ENCODE measurements at regions of chr2 and their contacts with region 1.

Region 1: DNA sequence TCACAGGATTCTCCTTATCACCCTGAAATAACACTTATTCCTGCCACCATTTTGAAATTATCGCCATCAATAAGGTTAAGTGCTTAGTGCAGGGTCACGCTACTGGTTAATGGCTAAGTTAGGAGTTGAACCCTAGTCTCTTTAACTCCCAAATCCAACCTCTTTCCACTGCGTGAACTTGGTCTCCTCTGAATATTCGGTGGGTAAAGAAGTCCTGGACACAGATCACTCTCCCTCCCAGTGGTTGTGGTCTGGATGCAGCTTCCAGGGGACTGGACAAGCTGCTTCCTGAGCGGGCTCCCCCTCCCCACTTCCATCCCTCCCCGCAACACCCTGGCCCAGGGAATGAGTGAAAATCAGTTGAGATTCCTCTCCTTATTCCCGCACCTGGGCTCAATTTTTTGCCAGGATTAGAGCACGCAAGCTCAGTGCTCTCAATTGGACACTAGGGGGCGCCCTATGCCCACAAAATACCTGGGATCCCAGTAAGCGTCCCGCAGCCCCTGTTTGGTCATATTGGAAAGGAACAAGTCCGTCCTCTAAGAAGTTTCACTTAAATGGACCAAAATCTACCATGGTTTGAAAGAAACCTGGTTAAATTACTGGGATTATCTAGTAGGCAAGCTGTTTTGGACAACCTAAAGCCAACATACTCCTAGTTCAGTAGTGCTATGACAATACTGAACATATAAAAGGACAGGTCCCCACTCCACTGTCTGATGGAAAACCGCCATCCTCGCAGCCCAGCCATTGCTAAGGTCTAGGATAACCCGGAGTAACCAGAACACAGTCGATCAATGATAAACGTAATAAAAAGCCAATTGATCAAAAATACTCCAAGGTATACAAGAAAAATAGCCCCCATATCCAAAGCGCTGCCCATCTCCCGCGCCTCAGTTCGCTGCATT is 40.4 kb downstream of the DHRS9 start:
- DNase-seq: peak; percentile 90 to 92 (median 92)
- ATAC-seq: peak; percentile 96
- H3K4me3 ChIP-seq: no peak overlapping the region
- H3K27ac ChIP-seq: no peak overlapping the region
- H3K4me1 ChIP-seq: peaks cover 0 to 17% of the 10 kb centered on the region in 2 experiments; a peak in 4 of 5 replicates
- H3K27me3 ChIP-seq: no peaks in the 10 kb centered on the region
- CTCF ChIP-seq: peak; percentile 90 to 95 (median 95)
- EP300 ChIP-seq: no peak
- POLR2A ChIP-seq: no peak
- RAD21 ChIP-seq: peak; percentile 98

Region 2: DNA sequence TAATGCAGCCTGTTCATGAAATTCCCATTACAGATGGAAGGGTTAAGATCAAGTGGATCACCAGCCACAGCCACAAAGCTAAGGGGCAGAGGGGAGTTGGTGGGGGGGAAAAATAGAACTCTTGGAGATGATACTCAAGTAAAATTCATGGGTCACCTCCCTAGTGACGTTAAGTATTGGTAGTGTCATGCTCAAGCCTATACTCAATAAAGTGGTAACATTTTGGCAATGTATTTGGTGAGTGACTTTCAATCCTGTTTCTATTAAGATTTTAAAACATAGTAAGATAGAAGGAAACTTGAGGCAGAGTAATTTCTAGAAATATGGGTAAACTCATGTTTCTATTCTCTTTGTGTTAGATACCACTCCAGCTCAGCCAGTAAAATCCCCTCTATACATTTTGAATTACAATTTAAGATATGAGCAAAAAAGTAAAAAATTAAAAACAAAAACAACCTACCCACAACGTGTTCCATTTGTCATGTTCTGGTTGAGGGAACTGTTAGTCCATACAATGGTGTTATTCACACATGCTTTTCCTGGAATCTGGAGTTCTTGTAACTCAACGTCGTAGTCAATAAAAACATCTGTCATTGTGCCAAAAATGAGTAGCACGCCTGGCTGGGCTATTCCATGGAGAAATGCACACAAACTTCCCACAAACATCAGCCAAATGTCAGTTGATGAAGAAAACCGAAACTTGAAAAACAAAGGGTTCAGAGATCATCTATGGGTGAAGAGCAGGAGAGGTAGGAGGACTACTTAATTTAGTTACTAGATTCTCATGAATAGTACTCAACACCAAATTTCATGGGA is 96.7 kb before region 1 on chr2:
- CTCF ChIA-PET with region 1: no interaction called
- POLR2A ChIA-PET with region 1: no interaction called
- in situ Hi-C with region 1: no loop called
- intact Hi-C with region 1: no loop called
- DNase-seq: no peak
- ATAC-seq: no peak
- H3K4me3 ChIP-seq: no peak overlapping the region
- H3K27ac ChIP-seq: no peak overlapping the region
- H3K4me1 ChIP-seq: peaks cover 12 to 48% of the 10 kb centered on the region in 2 experiments; a peak in 4 of 5 replicates
- H3K27me3 ChIP-seq: no peaks in the 10 kb centered on the region
- CTCF ChIP-seq: no peak
- EP300 ChIP-seq: no peak
- POLR2A ChIP-seq: no peak
- RAD21 ChIP-seq: no peak

Region 3: GRCh38 chr2:169034256-169034655 is 75.5 kb before region 1 on chr2:
- CTCF ChIA-PET with region 1: no interaction called
- POLR2A ChIA-PET with region 1: no interaction called
- in situ Hi-C with region 1: no loop called
- intact Hi-C with region 1: loop called (anchors 5 kb)
- DNase-seq: peak in 2 of 4 experiments; percentile 67 to 78
- ATAC-seq: peak; percentile 89
- H3K4me3 ChIP-seq: no peak overlapping the region
- H3K27ac ChIP-seq: peak overlapping the region; percentile 36; the same call in 1 of the 3 replicates
- H3K4me1 ChIP-seq: peaks cover 0 to 29% of the 10 kb centered on the region in 2 experiments; a peak in 4 of 5 replicates
- H3K27me3 ChIP-seq: no peaks in the 10 kb centered on the region
- CTCF ChIP-seq: peak in 2 of 3 experiments; percentile 23 to 37; a peak in 2 of 6 replicates
- EP300 ChIP-seq: peak; percentile 62; the same call in 1 of the 2 replicates
- POLR2A ChIP-seq: no peak
- RAD21 ChIP-seq: peak; percentile 28 to 61; a peak in 2 of 4 replicates

Region 4: GRCh38 chr2:169221745-169222369 is 112.1 kb after region 1 on chr2:
- CTCF ChIA-PET with region 1: interaction called, 19 read pairs
- POLR2A ChIA-PET with region 1: interaction called, 3 read pairs
- in situ Hi-C with region 1: loop called (anchors 5 kb)
- intact Hi-C with region 1: loop called (anchors 1 kb)
- DNase-seq: peak; percentile 24 to 71 (median 42)
- ATAC-seq: peak; percentile 87
- H3K4me3 ChIP-seq: no peak overlapping the region
- H3K27ac ChIP-seq: no peak overlapping the region
- H3K4me1 ChIP-seq: peaks cover 0 to 2% of the 10 kb centered on the region in 2 experiments; a peak in 1 of 5 replicates
- H3K27me3 ChIP-seq: no peaks in the 10 kb centered on the region
- CTCF ChIP-seq: peak; percentile 57 to 84 (median 63); a peak in 5 of 6 replicates
- EP300 ChIP-seq: no peak
- POLR2A ChIP-seq: no peak
- RAD21 ChIP-seq: peak; percentile 93 to 95

Region 5: GRCh38 chr2:169397697-169398096 is 287.9 kb after region 1 on chr2:
- CTCF ChIA-PET with region 1: no interaction called
- POLR2A ChIA-PET with region 1: no interaction called
- in situ Hi-C with region 1: no loop called
- intact Hi-C with region 1: loop called (anchors 1 kb)
- DNase-seq: peak in 3 of 4 experiments; percentile 16 to 34 (median 32)
- ATAC-seq: peak; percentile 57; the same call in 1 of the 3 replicates
- H3K4me3 ChIP-seq: no peak overlapping the region
- H3K27ac ChIP-seq: no peak overlapping the region
- H3K4me1 ChIP-seq: peaks cover 0 to 6% of the 10 kb centered on the region in 2 experiments; a peak in 2 of 5 replicates
- H3K27me3 ChIP-seq: peaks cover 4 to 19% of the 10 kb centered on the region in 2 experiments
- CTCF ChIP-seq: peak in 2 of 3 experiments; percentile 30 to 57; a peak in 2 of 6 replicates
- EP300 ChIP-seq: no peak
- POLR2A ChIP-seq: no peak
- RAD21 ChIP-seq: peak; percentile 64 to 81